Heart right ventricle (tissue), 16 donors: ENCODE measurements at regions of chr15 and their contacts with region 1.

Region 1: GRCh38 chr15:70670680-70671079 is 92.7 kb downstream of the UACA start:
- DNase-seq: no peak
- ATAC-seq: no peak
- H3K4me3 ChIP-seq: no peak overlapping the region
- H3K27ac ChIP-seq: peak overlapping the region in 2 of 10 donors; percentile 36 to 63
- H3K4me1 ChIP-seq: peaks cover 0 to 44% (median 31%) of the 10 kb centered on the region in 9 donors
- H3K27me3 ChIP-seq: no peaks in the 10 kb centered on the region
- CTCF ChIP-seq: peak in 5 of 9 donors; percentile 9 to 40 (median 29)

Region 2: GRCh38 chr15:70701891-70702568 is 31.4 kb after region 1 on chr15:
- intact Hi-C with region 1: no loop called
- DNase-seq: peak in 1 of 2 donors; percentile 38
- ATAC-seq: peak; percentile 70 to 85 (median 83)
- H3K4me3 ChIP-seq: peak overlapping the region in 9 of 10 donors; percentile 11 to 51 (median 41)
- H3K27ac ChIP-seq: peak overlapping the region; percentile 13 to 80 (median 70)
- H3K4me1 ChIP-seq: peaks cover 13 to 98% (median 64%) of the 10 kb centered on the region in 9 donors
- H3K27me3 ChIP-seq: no peaks in the 10 kb centered on the region
- CTCF ChIP-seq: no peak

Region 3: GRCh38 chr15:70722266-70723121 is 51.8 kb after region 1 on chr15:
- intact Hi-C with region 1: loop called in 7 of 10 experiments (anchors 10 kb)
- DNase-seq: no peak
- ATAC-seq: peak in 6 of 8 donors; percentile 16 to 54 (median 35)
- H3K4me3 ChIP-seq: no peak overlapping the region
- H3K27ac ChIP-seq: peak overlapping the region in 2 of 10 donors; percentile 9 to 57
- H3K4me1 ChIP-seq: peaks cover 0 to 71% (median 18%) of the 10 kb centered on the region in 9 donors
- H3K27me3 ChIP-seq: no peaks in the 10 kb centered on the region
- CTCF ChIP-seq: peak; percentile 62 to 86 (median 79)

Region 4: GRCh38 chr15:70875001-70875782 is 204.5 kb after region 1 on chr15:
- intact Hi-C with region 1: loop called in 3 of 10 experiments (anchors 5 to 10 kb)
- DNase-seq: peak in 1 of 2 donors; percentile 21
- ATAC-seq: peak in 7 of 8 donors; percentile 34 to 72 (median 56)
- H3K4me3 ChIP-seq: no peak overlapping the region
- H3K27ac ChIP-seq: no peak overlapping the region
- H3K4me1 ChIP-seq: peaks cover 0 to 11% (median 5%) of the 10 kb centered on the region in 9 donors
- H3K27me3 ChIP-seq: no peaks in the 10 kb centered on the region
- CTCF ChIP-seq: peak in 8 of 9 donors; percentile 45 to 77 (median 63)